Mammary epithelial cell (primary cell): ENCODE measurements at regions of chr14 and their contacts with region 1.

Region 1: DNA sequence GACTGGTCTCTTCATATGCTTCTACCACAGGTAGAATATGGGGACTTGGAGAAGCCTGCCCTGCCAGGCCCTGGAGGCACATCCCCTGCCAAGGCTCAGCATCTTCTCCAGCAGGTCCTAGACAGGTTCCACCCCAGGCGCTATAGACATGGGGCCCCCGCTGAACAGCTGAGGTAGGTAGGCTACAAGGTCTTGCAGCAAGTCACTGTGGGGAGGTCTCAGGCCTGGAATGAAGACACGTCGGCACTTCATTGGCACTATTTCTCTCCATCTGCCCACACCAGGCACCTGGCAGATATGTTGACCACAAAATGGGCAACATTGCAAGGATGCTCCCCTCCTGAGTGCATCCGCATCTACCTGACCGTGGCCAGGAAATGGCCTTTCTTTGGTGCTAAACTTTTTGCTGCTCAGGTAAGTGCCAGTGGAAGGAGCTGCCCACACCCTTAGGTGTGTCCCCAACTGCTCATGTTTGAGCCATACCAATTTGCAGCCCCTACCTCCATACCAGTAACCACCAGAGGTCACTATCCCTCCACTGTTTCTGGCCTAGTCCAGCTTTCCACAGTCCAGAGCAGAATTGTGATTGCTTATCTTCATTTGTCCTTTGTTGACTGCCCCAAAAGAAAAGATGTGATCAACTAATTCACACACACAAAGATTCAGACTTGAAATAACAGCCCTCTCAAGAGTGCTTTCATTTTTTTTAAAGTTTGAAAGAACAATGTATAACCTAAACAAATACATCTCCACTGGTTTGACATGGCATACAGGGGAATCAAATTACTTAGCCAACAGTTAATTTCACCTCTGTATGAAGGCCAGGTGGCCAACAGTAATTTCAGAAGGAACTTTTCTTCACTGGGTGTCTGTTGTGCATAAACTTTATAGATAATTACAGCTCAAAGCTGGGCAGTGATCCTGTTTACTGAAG is 16.1 kb downstream of the PIGH start:
- DNase-seq: peak; percentile 32
- H3K4me3 ChIP-seq: no peak overlapping the region
- H3K27ac ChIP-seq: no peak overlapping the region
- H3K4me1 ChIP-seq: no peaks in the 10 kb centered on the region
- H3K27me3 ChIP-seq: no peaks in the 10 kb centered on the region
- CTCF ChIP-seq: peak; percentile 65 to 83

Region 2: DNA sequence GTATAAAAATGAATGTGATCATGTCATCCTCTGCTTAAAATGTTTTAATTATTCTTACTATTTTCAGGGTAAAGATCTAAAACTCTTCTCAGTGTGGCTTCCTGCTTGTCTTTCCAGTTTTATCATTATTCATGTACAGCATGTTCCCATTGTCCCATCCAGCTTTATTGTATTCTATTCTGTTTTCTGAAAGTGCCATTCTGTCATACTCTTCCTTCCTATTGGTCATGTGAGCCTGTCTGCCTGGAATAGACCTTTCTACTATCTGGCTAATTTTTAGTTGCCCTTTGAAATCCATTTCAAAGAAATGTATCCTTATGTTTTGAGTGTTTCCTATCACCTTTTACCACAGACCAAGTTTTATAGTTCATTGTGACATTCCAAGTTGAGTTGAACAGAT is 307.8 kb before region 1 on chr14:
- CTCF ChIA-PET with region 1: no interaction called
- dilution Hi-C with region 1: no loop called
- in situ Hi-C with region 1: no loop called
- intact Hi-C with region 1: no loop called
- DNase-seq: no peak
- H3K4me3 ChIP-seq: no peak overlapping the region
- H3K27ac ChIP-seq: no peak overlapping the region
- H3K4me1 ChIP-seq: no peaks in the 10 kb centered on the region
- H3K27me3 ChIP-seq: no peaks in the 10 kb centered on the region
- CTCF ChIP-seq: no peak

Region 3: DNA sequence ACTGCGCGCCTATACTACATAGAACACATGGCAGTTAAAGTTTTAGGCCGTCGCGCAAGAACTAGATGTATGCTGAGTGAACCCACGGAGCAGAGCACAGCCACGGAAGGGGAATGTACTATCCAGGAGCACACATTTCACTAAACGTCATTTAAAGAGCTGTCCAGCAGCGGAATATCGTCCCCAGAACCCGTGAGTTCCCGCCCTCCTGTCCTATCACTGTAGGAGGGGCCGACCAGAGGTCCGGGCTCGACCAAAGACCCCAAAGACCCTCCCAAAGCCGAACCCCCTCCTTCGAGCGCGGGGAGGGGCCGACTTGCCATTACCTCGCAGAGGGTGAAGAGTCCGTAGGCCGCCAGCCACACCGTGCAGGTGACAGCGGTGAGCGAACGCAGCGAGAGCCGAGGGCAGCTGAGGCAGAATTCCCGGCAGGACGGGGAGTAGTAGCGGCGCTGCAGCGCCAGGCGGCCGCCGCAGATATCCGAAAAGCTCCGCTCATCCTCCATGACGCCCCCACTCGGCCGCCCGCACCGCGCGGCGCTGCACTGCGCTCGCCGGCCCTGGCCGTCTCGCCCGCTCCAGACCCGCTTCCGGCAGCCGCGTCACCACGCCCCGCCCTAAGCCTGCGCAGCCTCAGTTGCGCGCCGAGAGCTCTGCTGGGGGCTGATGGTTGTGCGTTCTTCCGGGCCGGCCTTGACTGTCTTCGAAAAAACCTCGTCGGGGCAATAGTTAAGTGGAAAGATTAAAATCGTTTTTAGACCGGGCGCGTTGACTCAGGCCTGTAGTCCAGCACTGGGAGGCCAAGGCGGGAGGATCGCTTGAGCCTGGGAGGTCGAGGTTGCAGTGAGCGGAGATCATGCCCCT is 16.0 kb after region 1 on chr14 and contains the start of gene PIGH:
- CTCF ChIA-PET with region 1: no interaction called
- dilution Hi-C with region 1: no loop called
- in situ Hi-C with region 1: no loop called
- intact Hi-C with region 1: loop called (anchors 1 kb)
- DNase-seq: peak; percentile 84
- H3K4me3 ChIP-seq: peak within 1 kb of the TSS; percentile 88 to 92 (median 91)
- H3K27ac ChIP-seq: peak within 1 kb of the TSS; percentile 63
- H3K4me1 ChIP-seq: peaks cover 4% of the 10 kb centered on the region
- H3K27me3 ChIP-seq: no peaks in the 10 kb centered on the region
- CTCF ChIP-seq: peak; percentile 13 to 67
- total RNA-seq, gene PIGH: 16.7 to 18.2 TPM

Region 4: GRCh38 chr14:67619446-67620216 is 35.7 kb after region 1 on chr14 and contains the start of gene ARG2:
- CTCF ChIA-PET with region 1: no interaction called
- dilution Hi-C with region 1: no loop called
- in situ Hi-C with region 1: no loop called
- intact Hi-C with region 1: loop called (anchors 1 kb)
- DNase-seq: peak; percentile 95
- H3K4me3 ChIP-seq: peak within 1 kb of the TSS; percentile 73 to 85 (median 81)
- H3K27ac ChIP-seq: peak within 1 kb of the TSS; percentile 69
- H3K4me1 ChIP-seq: peaks cover 28% of the 10 kb centered on the region
- H3K27me3 ChIP-seq: no peaks in the 10 kb centered on the region
- CTCF ChIP-seq: peak in 1 of 2 donors; percentile 13
- total RNA-seq, gene ARG2: 5.0 to 19.1 TPM